Naive thymus-derived CD4-positive, alpha-beta T cell (primary cell): ENCODE measurements at regions of chr22 and their contacts with region 1.

Region 1: GRCh38 chr22:23849009-23850006 is 8.4 kb upstream of the SLC2A11 start:
- DNase-seq: peak; percentile 70 to 96 (median 84)
- ATAC-seq: peak; percentile 98
- H3K4me3 ChIP-seq: no peak overlapping the region
- H3K4me3 Mint-ChIP-seq: peak overlapping the region in 3 of 10 donors; percentile 12 to 49 (median 23)
- H3K27ac ChIP-seq: no peak overlapping the region
- H3K27ac Mint-ChIP-seq: no peak overlapping the region
- H3K4me1 ChIP-seq: no peaks in the 10 kb centered on the region
- H3K4me1 Mint-ChIP-seq: peaks cover 0 to 4% (median 0%) of the 10 kb centered on the region in 7 donors
- H3K27me3 ChIP-seq: no peaks in the 10 kb centered on the region
- H3K27me3 Mint-ChIP-seq: peaks cover 0 to 13% (median 0%) of the 10 kb centered on the region in 5 donors

Region 2: GRCh38 chr22:23128269-23129108 is 720.8 kb before region 1 on chr22:
- CTCF ChIA-PET with region 1: no interaction called
- POLR2A ChIA-PET with region 1: no interaction called
- intact Hi-C with region 1: no loop called
- DNase-seq: peak; percentile 46 to 74 (median 68)
- ATAC-seq: peak; percentile 92
- H3K4me3 ChIP-seq: no peak overlapping the region
- H3K4me3 Mint-ChIP-seq: no peak overlapping the region
- H3K27ac ChIP-seq: no peak overlapping the region
- H3K27ac Mint-ChIP-seq: peak overlapping the region in 1 of 9 donors; percentile 82
- H3K4me1 ChIP-seq: no peaks in the 10 kb centered on the region
- H3K4me1 Mint-ChIP-seq: peaks cover 0 to 5% (median 0%) of the 10 kb centered on the region in 7 donors
- H3K27me3 ChIP-seq: no peaks in the 10 kb centered on the region
- H3K27me3 Mint-ChIP-seq: peaks cover 0 to 6% (median 0%) of the 10 kb centered on the region in 5 donors

Region 3: DNA sequence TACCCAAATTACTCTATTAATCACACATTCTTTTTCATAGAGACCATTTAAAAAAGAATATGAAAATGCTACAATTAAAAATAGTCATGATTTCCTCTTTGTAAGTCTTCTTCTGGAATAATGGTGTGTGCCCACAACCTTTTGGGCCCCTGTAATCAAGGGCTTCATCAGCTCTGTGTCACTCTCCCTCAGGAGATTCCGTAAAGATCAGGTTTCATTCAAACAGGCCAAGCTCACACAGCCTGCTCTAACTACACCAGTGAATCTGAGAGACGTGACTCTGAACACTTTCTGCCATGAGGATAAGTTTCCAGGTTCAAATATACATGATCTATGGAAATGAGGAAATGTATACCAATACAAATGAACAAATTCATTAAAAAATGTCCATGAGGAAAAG is 226.7 kb before region 1 on chr22:
- CTCF ChIA-PET with region 1: interaction called, 8 read pairs
- POLR2A ChIA-PET with region 1: no interaction called
- intact Hi-C with region 1: loop called (anchors 1 to 5 kb)
- DNase-seq: no peak
- ATAC-seq: no peak
- H3K4me3 ChIP-seq: no peak overlapping the region
- H3K4me3 Mint-ChIP-seq: no peak overlapping the region
- H3K27ac ChIP-seq: no peak overlapping the region
- H3K27ac Mint-ChIP-seq: no peak overlapping the region
- H3K4me1 ChIP-seq: no peaks in the 10 kb centered on the region
- H3K4me1 Mint-ChIP-seq: peaks cover 0 to 4% (median 3%) of the 10 kb centered on the region in 7 donors
- H3K27me3 ChIP-seq: no peaks in the 10 kb centered on the region
- H3K27me3 Mint-ChIP-seq: peaks cover 0 to 4% (median 0%) of the 10 kb centered on the region in 5 donors

Region 4: GRCh38 chr22:23696326-23696851 is 152.9 kb before region 1 on chr22:
- CTCF ChIA-PET with region 1: interaction called, 4 read pairs
- POLR2A ChIA-PET with region 1: no interaction called
- intact Hi-C with region 1: loop called in 1 of 2 experiments (anchors 5 kb)
- DNase-seq: peak; percentile 60 to 91 (median 86)
- ATAC-seq: peak; percentile 99
- H3K4me3 ChIP-seq: peak overlapping the region; percentile 71
- H3K4me3 Mint-ChIP-seq: peak overlapping the region; percentile 94 to 100 (median 98)
- H3K27ac ChIP-seq: peak overlapping the region; percentile 99
- H3K27ac Mint-ChIP-seq: peak overlapping the region; percentile 99 to 100 (median 100)
- H3K4me1 ChIP-seq: peaks cover 28 to 38% of the 10 kb centered on the region in 2 donors
- H3K4me1 Mint-ChIP-seq: peaks cover 37 to 64% (median 51%) of the 10 kb centered on the region in 7 donors
- H3K27me3 ChIP-seq: no peaks in the 10 kb centered on the region
- H3K27me3 Mint-ChIP-seq: no peaks in the 10 kb centered on the region

Region 5: DNA sequence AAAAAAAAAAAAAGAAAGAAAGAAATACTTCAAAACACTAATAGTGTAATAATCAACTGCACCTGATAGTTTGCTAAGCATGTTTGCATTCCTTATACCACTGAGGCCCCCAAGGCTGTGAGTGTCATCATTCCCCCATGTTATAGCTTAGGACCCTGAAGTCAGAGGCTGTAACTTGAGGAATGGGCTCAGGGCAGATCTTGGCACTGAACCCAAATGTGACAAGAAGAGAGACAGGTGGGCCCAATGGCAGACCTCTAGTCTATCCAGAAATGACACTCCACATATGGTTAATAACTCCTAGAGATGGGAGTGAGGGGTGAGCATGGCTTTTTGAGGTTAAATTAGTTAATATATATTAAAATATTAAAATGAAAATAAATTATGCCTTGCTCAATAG is 111.6 kb before region 1 on chr22:
- CTCF ChIA-PET with region 1: interaction called, 4 read pairs
- POLR2A ChIA-PET with region 1: no interaction called
- intact Hi-C with region 1: loop called in 1 of 2 experiments (anchors 5 kb)
- DNase-seq: no peak
- ATAC-seq: no peak
- H3K4me3 ChIP-seq: no peak overlapping the region
- H3K4me3 Mint-ChIP-seq: no peak overlapping the region
- H3K27ac ChIP-seq: no peak overlapping the region
- H3K27ac Mint-ChIP-seq: no peak overlapping the region
- H3K4me1 ChIP-seq: no peaks in the 10 kb centered on the region
- H3K4me1 Mint-ChIP-seq: peaks cover 0 to 1% (median 0%) of the 10 kb centered on the region in 7 donors
- H3K27me3 ChIP-seq: no peaks in the 10 kb centered on the region
- H3K27me3 Mint-ChIP-seq: no peaks in the 10 kb centered on the region

Region 6: GRCh38 chr22:23767673-23768548 is 81.4 kb before region 1 on chr22 and contains the start of gene CHCHD10:
- CTCF ChIA-PET with region 1: interaction called, 6 read pairs
- POLR2A ChIA-PET with region 1: no interaction called
- intact Hi-C with region 1: loop called in 1 of 2 experiments (anchors 1 kb)
- DNase-seq: peak; percentile 63 to 84 (median 75)
- ATAC-seq: peak; percentile 80
- H3K4me3 ChIP-seq: peak within 1 kb of the TSS; percentile 92
- H3K4me3 Mint-ChIP-seq: peak within 1 kb of the TSS; percentile 63 to 88 (median 83)
- H3K27ac ChIP-seq: peak within 1 kb of the TSS; percentile 85
- H3K27ac Mint-ChIP-seq: peak within 1 kb of the TSS in 8 of 9 donors; percentile 42 to 82 (median 64)
- H3K4me1 ChIP-seq: peaks cover 27 to 37% of the 10 kb centered on the region in 2 donors
- H3K4me1 Mint-ChIP-seq: peaks cover 3 to 52% (median 38%) of the 10 kb centered on the region in 7 donors
- H3K27me3 ChIP-seq: no peaks in the 10 kb centered on the region
- H3K27me3 Mint-ChIP-seq: peaks cover 0 to 4% (median 0%) of the 10 kb centered on the region in 5 donors
- total RNA-seq, gene CHCHD10: 38.2 to 56.1 (median 46.4) TPM